MCF 10A (cell line): ENCODE measurements at regions of chr10 and their contacts with region 1.

Region 1: GRCh38 chr10:60434418-60435046 is 44.9 kb upstream of the ANK3 start:
- DNase-seq: peak; percentile 69
- H3K4me3 Mint-ChIP-seq: no peak overlapping the region
- H3K27ac Mint-ChIP-seq: no peak overlapping the region
- H3K4me1 Mint-ChIP-seq: peaks cover 20% of the 10 kb centered on the region
- H3K27me3 Mint-ChIP-seq: no peaks in the 10 kb centered on the region
- CTCF ChIP-seq: peak; percentile 68

Region 2: GRCh38 chr10:59839588-59839987 is 594.9 kb before region 1 on chr10:
- CTCF ChIA-PET with region 1: no interaction called
- POLR2A ChIA-PET with region 1: no interaction called
- intact Hi-C with region 1: no loop called
- DNase-seq: peak; percentile 23
- H3K4me3 Mint-ChIP-seq: no peak overlapping the region
- H3K27ac Mint-ChIP-seq: no peak overlapping the region
- H3K4me1 Mint-ChIP-seq: peaks cover 27% of the 10 kb centered on the region
- H3K27me3 Mint-ChIP-seq: no peaks in the 10 kb centered on the region
- CTCF ChIP-seq: no peak

Region 3: GRCh38 chr10:60099998-60100747 is 334.4 kb before region 1 on chr10:
- CTCF ChIA-PET with region 1: interaction called, 5 read pairs
- POLR2A ChIA-PET with region 1: interaction called, 3 read pairs
- intact Hi-C with region 1: loop called (anchors 1 kb)
- DNase-seq: peak; percentile 63
- H3K4me3 Mint-ChIP-seq: no peak overlapping the region
- H3K27ac Mint-ChIP-seq: no peak overlapping the region
- H3K4me1 Mint-ChIP-seq: no peaks in the 10 kb centered on the region
- H3K27me3 Mint-ChIP-seq: no peaks in the 10 kb centered on the region
- CTCF ChIP-seq: peak; percentile 57

Region 4: DNA sequence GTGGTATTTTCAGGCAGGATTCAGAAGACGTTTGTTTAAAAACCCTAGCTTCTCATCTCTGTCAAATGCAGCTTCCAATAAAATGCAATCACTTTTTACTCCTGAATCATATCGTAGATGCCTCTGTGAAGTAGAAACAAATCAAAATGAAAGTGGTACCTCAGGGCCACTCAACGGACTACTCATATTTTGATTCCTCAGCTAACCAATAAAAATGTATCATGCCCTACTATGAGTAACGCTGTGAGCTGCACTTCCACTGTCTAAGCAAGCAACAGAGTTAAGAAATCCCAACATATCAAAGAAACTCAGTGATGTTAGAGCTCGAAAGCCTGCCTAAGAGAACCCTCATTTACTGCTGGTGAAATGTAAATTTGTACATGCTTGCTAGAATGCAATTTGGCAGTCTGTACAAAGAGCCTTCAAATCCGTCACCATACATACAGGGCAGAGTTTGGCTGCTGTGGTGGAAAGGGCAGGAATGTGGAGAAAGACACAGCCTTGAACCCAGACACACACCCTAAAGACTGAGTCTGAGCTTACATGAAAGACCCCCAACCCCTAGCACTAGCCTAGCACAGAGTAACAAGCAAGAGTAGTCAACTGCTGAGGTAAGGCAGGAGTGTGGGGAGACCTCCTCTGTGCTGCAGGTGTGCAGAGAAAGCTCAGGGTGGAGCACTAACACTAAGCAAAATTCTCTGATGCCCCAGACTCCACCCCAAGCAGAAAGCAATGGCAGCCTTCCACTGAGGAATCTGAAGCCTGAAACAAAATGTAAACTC is 196.4 kb before region 1 on chr10:
- CTCF ChIA-PET with region 1: interaction called, 43 read pairs
- POLR2A ChIA-PET with region 1: interaction called, 3 read pairs
- intact Hi-C with region 1: loop called (anchors 1 kb)
- DNase-seq: peak; percentile 52
- H3K4me3 Mint-ChIP-seq: no peak overlapping the region
- H3K27ac Mint-ChIP-seq: no peak overlapping the region
- H3K4me1 Mint-ChIP-seq: no peaks in the 10 kb centered on the region
- H3K27me3 Mint-ChIP-seq: no peaks in the 10 kb centered on the region
- CTCF ChIP-seq: no peak

Region 5: DNA sequence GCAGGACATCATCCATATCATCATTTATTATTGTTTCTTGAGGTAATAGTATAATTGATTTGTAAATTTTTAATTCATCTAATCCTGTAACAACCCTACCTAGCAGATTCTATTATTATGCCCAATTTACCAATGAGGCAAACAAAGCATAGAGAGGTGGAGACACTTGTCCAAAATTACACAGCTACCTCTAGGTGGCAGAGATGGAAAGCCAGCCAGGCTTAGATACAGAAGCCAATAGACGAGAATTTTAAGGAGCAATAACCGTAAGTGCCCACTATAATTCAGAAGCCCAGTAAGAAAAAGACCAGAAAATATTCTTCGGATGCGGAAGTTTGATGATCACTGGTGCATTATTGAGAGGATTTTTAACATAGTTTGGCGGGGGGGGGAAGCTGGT is 98.8 kb before region 1 on chr10:
- CTCF ChIA-PET with region 1: interaction called, 15 read pairs
- POLR2A ChIA-PET with region 1: interaction called, 7 read pairs
- intact Hi-C with region 1: loop called (anchors 1 kb)
- DNase-seq: peak; percentile 47
- H3K4me3 Mint-ChIP-seq: no peak overlapping the region
- H3K27ac Mint-ChIP-seq: peak overlapping the region; percentile 10
- H3K4me1 Mint-ChIP-seq: no peaks in the 10 kb centered on the region
- H3K27me3 Mint-ChIP-seq: no peaks in the 10 kb centered on the region
- CTCF ChIP-seq: peak; percentile 36

Region 6: GRCh38 chr10:60384708-60385398 is 49.7 kb before region 1 on chr10:
- CTCF ChIA-PET with region 1: interaction called, 4 read pairs
- POLR2A ChIA-PET with region 1: interaction called, 3 read pairs
- intact Hi-C with region 1: loop called (anchors 5 kb)
- DNase-seq: peak; percentile 97
- H3K4me3 Mint-ChIP-seq: peak overlapping the region; percentile 20
- H3K27ac Mint-ChIP-seq: peak overlapping the region; percentile 18
- H3K4me1 Mint-ChIP-seq: peaks cover 28% of the 10 kb centered on the region
- H3K27me3 Mint-ChIP-seq: no peaks in the 10 kb centered on the region
- CTCF ChIP-seq: no peak

Region 7: DNA sequence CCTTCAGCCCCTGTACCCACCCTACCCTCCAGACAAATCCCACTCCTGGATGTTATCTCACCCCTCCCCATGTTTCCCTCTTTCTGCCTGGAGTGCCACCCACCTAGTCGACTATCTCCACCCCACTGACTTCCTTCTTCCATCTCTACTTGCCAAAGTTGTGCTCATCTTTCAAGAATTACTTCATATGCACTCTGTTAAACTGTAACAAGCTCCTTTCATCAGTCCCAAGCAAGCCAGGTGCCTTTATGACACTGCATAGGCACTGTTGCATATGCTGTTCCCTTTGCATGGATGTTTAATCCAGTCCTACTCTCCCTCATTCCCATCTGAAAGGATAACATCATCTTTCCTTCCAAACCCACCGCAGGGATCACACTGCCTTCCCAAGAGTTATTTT is 334.9 kb after region 1 on chr10:
- CTCF ChIA-PET with region 1: interaction called, 10 read pairs
- POLR2A ChIA-PET with region 1: no interaction called
- intact Hi-C with region 1: no loop called
- DNase-seq: no peak
- H3K4me3 Mint-ChIP-seq: no peak overlapping the region
- H3K27ac Mint-ChIP-seq: no peak overlapping the region
- H3K4me1 Mint-ChIP-seq: peaks cover 21% of the 10 kb centered on the region
- H3K27me3 Mint-ChIP-seq: no peaks in the 10 kb centered on the region
- CTCF ChIP-seq: no peak